ENCODE measurements at regions of chr12 and their contacts with region 1.

Region 1: DNA sequence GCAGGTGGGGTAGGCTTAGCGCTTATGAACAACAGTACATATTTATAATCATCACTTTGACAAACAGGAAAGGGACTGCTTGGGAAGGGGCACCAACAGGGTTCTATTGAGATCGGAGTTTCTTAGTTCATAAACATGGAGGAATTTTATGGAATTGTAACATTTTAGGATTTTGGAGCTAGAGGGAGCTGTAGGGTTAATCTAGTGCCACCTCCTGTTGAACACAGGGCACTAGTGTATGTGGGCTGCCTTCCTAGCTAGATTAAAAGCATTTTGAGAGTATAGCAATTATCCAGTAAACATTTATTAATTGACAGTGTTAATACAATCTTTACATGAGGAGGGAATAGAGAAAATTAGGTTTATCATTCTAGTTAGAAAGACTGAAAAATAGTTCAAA is 23.1 kb upstream of the TBC1D30 start:
- DNase-seq: no peak
- ATAC-seq: peak; percentile 46
- H3K4me3 ChIP-seq: no peak overlapping the region
- H3K27ac ChIP-seq: peak overlapping the region; percentile 69
- H3K4me1 ChIP-seq: peaks cover 19% of the 10 kb centered on the region
- H3K27me3 ChIP-seq: no peaks in the 10 kb centered on the region
- CTCF ChIP-seq: peak; percentile 9 to 47 (median 28); a peak in 5 of 6 replicates
- EP300 ChIP-seq: no peak
- POLR2A ChIP-seq: no peak
- RAD21 ChIP-seq: no peak

Region 2: GRCh38 chr12:64551698-64552097 is 249.7 kb before region 1 on chr12:
- CTCF ChIA-PET with region 1: interaction called, 29 read pairs
- POLR2A ChIA-PET with region 1: no interaction called
- RAD21 ChIA-PET with region 1: interaction called, 12 read pairs
- SMC1A ChIA-PET with region 1: no interaction called
- in situ Hi-C with region 1: no loop called
- intact Hi-C with region 1: no loop called
- DNase-seq: no peak
- ATAC-seq: no peak
- H3K4me3 ChIP-seq: no peak overlapping the region
- H3K27ac ChIP-seq: no peak overlapping the region
- H3K4me1 ChIP-seq: no peaks in the 10 kb centered on the region; the same call in 1 of the 2 replicates
- H3K27me3 ChIP-seq: no peaks in the 10 kb centered on the region; a peak in 1 of 4 replicates
- CTCF ChIP-seq: no peak
- EP300 ChIP-seq: no peak
- POLR2A ChIP-seq: no peak
- RAD21 ChIP-seq: no peak

Region 3: DNA sequence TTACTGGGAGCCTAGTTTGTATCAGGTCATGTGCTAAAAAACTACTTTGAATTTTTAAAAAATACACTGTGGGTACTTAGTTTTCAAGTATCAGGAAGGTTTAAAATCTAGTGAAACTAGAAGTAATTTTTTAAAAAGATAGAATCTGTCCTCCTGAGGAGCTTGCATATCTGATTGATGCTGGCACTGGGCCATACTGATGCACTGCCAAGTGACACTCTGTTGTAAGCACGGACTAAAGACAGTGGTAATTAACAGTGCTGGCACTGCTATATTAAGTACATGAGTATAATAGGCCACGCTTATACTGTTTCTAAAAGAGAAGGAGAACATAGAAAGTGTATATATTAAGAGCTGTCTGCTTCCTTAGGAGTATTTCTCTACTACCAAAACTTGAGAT is 13.1 kb after region 1 on chr12:
- CTCF ChIA-PET with region 1: interaction called, 32 read pairs
- POLR2A ChIA-PET with region 1: no interaction called
- RAD21 ChIA-PET with region 1: interaction called, 6 read pairs
- SMC1A ChIA-PET with region 1: interaction called, 8 read pairs
- in situ Hi-C with region 1: no loop called
- intact Hi-C with region 1: no loop called
- DNase-seq: no peak
- ATAC-seq: peak; percentile 14; the same call in 1 of the 3 replicates
- H3K4me3 ChIP-seq: no peak overlapping the region
- H3K27ac ChIP-seq: no peak overlapping the region
- H3K4me1 ChIP-seq: peaks cover 4% of the 10 kb centered on the region; the same call in 1 of the 2 replicates
- H3K27me3 ChIP-seq: no peaks in the 10 kb centered on the region; a peak in 1 of 4 replicates
- CTCF ChIP-seq: no peak
- EP300 ChIP-seq: no peak
- POLR2A ChIP-seq: no peak
- RAD21 ChIP-seq: no peak

Region 4: DNA sequence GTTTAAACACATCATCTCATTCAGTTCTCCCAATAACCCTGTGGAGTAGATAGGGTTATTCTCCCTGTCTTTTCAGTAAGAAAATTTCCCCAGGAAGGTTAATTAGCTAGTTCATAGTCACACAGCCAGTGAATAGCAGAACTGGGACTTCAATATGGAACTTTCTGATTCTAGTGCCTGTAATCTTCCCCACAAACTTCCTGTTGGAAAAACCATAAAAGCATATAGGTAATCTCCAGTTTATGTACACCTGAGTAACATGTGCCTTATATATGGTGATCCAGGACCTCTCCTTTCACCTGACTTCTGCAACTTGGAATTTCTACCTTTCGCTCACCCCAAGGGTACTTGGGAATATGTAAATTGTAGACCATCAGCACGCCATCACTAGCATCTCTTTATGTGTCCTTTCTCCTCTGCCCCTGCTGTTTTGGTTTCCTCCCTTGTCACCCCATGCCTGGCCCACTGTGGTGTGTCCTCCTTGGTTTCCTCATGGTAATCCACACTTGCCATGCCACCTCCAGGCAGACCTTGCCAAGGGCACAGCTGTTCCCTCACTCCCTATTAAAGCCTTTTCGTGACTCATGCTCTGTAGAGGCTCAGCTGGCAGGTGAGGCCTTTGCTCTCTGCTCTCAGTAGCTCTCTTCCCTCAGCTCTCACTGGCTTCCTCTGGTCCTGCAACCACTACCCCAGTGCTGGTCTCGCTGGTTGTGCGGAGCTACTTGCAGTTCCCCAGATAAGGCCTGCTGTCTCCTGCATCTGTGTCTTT is 39.8 kb after region 1 on chr12:
- CTCF ChIA-PET with region 1: interaction called, 10 read pairs
- POLR2A ChIA-PET with region 1: no interaction called
- RAD21 ChIA-PET with region 1: interaction called, 4 read pairs
- SMC1A ChIA-PET with region 1: interaction called, 10 read pairs
- in situ Hi-C with region 1: no loop called
- intact Hi-C with region 1: no loop called
- DNase-seq: no peak
- ATAC-seq: no peak
- H3K4me3 ChIP-seq: no peak overlapping the region
- H3K27ac ChIP-seq: no peak overlapping the region
- H3K4me1 ChIP-seq: no peaks in the 10 kb centered on the region
- H3K27me3 ChIP-seq: no peaks in the 10 kb centered on the region
- CTCF ChIP-seq: no peak
- EP300 ChIP-seq: no peak
- POLR2A ChIP-seq: no peak
- RAD21 ChIP-seq: no peak

Region 5: GRCh38 chr12:64877363-64878004 is 76.1 kb after region 1 on chr12:
- CTCF ChIA-PET with region 1: interaction called, 192 read pairs
- POLR2A ChIA-PET with region 1: interaction called, 17 read pairs
- RAD21 ChIA-PET with region 1: interaction called, 54 read pairs
- SMC1A ChIA-PET with region 1: interaction called, 130 read pairs
- in situ Hi-C with region 1: no loop called
- intact Hi-C with region 1: no loop called
- DNase-seq: peak; percentile 78
- ATAC-seq: peak; percentile 82
- H3K4me3 ChIP-seq: peak overlapping the region; percentile 48
- H3K27ac ChIP-seq: peak overlapping the region; percentile 87
- H3K4me1 ChIP-seq: peaks cover 65% of the 10 kb centered on the region
- H3K27me3 ChIP-seq: no peaks in the 10 kb centered on the region
- CTCF ChIP-seq: no peak
- EP300 ChIP-seq: peak; percentile 70 to 87
- POLR2A ChIP-seq: no peak
- RAD21 ChIP-seq: no peak

Region 6: DNA sequence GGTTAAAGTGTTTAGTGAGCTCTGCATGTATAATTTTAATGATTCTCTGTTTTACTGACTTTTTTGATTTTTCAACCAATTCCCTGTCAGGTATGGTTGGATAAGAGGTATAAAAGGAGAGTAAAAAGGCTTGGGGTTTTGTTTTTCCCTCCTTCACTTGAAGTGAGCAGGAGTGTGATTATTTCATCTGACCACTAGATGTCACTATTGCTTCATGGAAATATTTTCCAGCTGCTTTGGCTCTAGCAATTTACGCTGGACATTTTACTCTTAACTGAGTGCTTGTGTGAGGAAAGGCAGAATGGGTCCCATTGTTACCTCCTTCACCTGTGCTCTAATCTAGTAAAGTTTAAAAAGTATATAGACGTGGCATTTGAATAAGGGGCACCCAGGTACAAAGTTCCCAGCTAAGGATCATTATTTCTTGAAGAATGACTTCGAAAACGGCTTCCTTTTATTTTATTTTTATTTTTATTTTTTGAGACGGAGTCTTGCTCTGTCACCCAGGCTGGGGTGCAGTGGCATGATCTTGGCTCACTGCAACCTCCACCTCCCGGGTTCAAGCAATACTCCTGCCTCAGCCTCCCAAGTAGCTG is 89.6 kb after region 1 on chr12:
- CTCF ChIA-PET with region 1: interaction called, 192 read pairs
- POLR2A ChIA-PET with region 1: interaction called, 5 read pairs
- RAD21 ChIA-PET with region 1: interaction called, 73 read pairs
- SMC1A ChIA-PET with region 1: interaction called, 130 read pairs
- in situ Hi-C with region 1: loop called (anchors 5 kb)
- intact Hi-C with region 1: loop called (anchors 2 kb)
- DNase-seq: no peak
- ATAC-seq: peak; percentile 60
- H3K4me3 ChIP-seq: no peak overlapping the region
- H3K27ac ChIP-seq: no peak overlapping the region
- H3K4me1 ChIP-seq: peaks cover 26% of the 10 kb centered on the region
- H3K27me3 ChIP-seq: no peaks in the 10 kb centered on the region
- CTCF ChIP-seq: peak; percentile 48 to 69 (median 59); a peak in 5 of 6 replicates
- EP300 ChIP-seq: no peak
- POLR2A ChIP-seq: no peak
- RAD21 ChIP-seq: peak; percentile 95

Region 7: DNA sequence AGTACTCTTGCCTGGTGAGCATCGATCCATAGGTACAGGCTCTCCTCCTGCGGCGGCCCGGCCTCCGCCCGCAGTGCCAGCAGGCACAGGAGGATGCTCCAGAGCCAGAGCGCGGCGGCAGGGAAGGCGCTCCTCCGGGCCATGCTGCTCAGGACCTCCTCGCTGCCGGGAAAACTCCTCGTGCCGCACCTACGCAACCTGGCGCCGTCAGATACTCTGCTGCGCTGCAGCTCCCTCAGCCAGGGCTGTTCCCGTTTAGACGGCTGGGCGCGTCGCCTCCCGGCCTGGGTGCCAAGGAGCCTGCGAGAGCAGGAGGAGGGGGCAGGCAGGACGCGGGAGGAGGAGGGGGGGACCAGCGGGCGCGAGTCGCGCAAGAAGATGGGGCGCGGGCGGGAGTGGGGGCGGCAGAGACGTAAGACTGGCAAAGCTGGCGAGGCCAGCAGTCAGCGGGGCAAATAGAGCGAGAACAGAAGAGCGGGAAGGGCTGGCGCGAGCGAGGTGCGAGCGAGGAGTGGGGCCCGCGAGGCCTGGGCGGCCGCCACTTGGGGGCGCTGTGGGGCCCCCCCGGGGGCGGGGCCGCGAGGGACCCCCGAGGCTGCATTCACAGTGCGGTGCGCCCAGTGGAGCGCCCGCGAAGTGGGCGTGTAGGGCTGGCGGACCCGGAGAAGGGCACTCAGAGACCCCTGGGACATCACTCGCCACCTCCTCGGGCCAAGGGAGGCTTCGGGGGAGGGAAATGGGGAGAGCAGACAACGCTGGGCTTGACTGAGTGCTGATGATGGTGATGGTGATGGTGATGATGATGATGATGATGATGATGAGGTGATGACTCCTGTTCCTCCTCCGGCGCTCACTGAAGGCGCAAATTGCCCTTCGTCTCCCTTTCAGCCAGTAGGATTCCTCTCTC is 319.9 kb after region 1 on chr12 and contains the start of gene WIF1:
- CTCF ChIA-PET with region 1: interaction called, 38 read pairs
- POLR2A ChIA-PET with region 1: interaction called, 3 read pairs
- RAD21 ChIA-PET with region 1: interaction called, 16 read pairs
- SMC1A ChIA-PET with region 1: interaction called, 25 read pairs
- in situ Hi-C with region 1: loop called (anchors 5 kb)
- intact Hi-C with region 1: loop called (anchors 1 kb)
- DNase-seq: no peak
- ATAC-seq: peak; percentile 87
- H3K4me3 ChIP-seq: peak within 1 kb of the TSS; percentile 60; the same call in 1 of the 2 replicates
- H3K27ac ChIP-seq: no peak within 1 kb of the TSS
- H3K4me1 ChIP-seq: no peaks in the 10 kb centered on the region; the same call in 1 of the 2 replicates
- H3K27me3 ChIP-seq: peaks cover 2 to 5% of the 10 kb centered on the region in 2 experiments; a peak in 3 of 4 replicates
- CTCF ChIP-seq: peak; percentile 31 to 45 (median 41); a peak in 5 of 6 replicates
- EP300 ChIP-seq: no peak
- POLR2A ChIP-seq: no peak
- RAD21 ChIP-seq: 0 out of 2 replicates have a peak, but pooled peaks have one; percentile 12
- polyA plus RNA-seq, gene WIF1: 0.05 TPM in 1 of 2 experiments, not detected in the other